ENCODE measurements at regions of chr2 and their contacts with region 1.

Region 1: DNA sequence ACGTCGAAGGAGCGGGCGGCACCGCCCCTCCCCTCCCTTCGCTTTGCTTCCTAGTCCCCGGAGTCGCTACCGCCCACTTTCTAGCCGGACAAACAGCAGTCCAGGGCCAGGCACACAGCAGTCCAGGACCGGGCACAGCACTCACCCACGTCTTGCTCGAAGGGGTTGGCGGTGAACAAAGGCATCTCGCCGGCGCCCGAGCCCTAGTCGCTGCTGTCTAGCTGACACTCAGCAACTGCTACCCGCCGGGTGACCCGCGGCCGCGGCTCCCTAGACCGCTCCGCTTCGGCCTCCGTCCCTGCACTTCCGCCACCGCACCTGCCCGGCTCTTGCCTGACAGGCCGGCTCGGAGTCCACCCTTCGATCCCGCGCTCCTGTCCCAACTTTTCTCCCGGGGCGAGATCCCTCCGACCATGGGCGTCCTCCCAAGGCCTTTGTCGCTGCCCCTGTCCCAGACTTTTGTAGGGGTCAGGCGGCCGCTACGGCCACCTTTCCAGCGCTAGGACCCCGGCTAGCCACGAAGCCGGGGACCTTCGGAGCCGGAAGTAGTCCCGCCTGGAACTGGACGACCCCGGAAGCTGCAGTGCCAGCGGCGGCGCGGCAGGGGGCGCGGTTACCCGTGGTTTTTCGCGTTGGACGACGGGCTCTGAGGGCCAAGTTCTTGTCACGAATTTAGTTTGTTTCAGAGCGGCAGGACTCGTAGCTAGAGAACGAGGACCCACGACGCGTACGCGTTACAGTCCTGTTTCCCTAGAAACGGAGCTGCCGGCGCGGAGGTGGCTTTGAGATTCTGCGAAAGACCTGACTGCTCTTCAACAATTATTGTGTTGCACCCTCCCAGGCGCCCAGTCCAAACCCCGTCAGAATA is at the start of gene STAM2:
- DNase-seq: peak; percentile 88 to 93
- ATAC-seq: peak; percentile 91
- H3K4me3 ChIP-seq: peak within 1 kb of the TSS; percentile 64
- H3K27ac ChIP-seq: peak within 1 kb of the TSS; percentile 94 to 97
- H3K4me1 ChIP-seq: peaks cover 33% of the 10 kb centered on the region
- CTCF ChIP-seq: peak; percentile 92
- EP300 ChIP-seq: no peak
- POLR2A ChIP-seq: peak; percentile 84
- RAD21 ChIP-seq: peak; percentile 92 to 97
- polyA plus RNA-seq, gene STAM2: 25.7 and 34.5 TPM in 2 replicates

Region 2: DNA sequence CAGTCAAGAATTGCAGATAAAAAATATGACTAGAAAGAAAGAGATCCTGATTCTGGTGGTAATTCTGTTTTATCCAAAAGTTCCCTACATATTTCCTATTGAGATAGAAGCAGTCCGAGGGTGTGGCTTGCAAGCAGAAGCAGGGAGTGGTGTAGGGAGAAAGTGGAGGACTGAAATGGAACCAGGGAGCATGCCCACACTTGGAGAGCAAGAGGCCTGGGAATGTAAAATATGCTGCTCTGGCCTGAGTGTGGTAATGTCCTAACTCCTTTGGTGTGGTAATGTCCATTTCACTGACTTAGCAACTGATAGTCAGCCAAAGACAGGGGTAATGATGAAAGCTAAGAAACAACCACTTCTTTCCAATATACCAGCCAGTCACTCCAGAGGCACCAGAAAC is 129.1 kb after region 1 on chr2:
- CTCF ChIA-PET with region 1: no interaction called
- POLR2A ChIA-PET with region 1: no interaction called
- DNase-seq: peak in 1 of 2 experiments; percentile 19
- ATAC-seq: peak in 1 of 2 experiments; percentile 25; a peak in 1 of 6 replicates
- H3K4me3 ChIP-seq: no peak overlapping the region
- H3K27ac ChIP-seq: no peak overlapping the region
- H3K4me1 ChIP-seq: peaks cover 24% of the 10 kb centered on the region
- CTCF ChIP-seq: no peak
- EP300 ChIP-seq: no peak
- POLR2A ChIP-seq: no peak
- RAD21 ChIP-seq: no peak

Region 3: GRCh38 chr2:152627351-152627957 is 451.8 kb after region 1 on chr2:
- CTCF ChIA-PET with region 1: interaction called, 15 read pairs
- POLR2A ChIA-PET with region 1: no interaction called
- DNase-seq: peak; percentile 14 to 42
- ATAC-seq: peak; percentile 68 to 73; a peak in 4 of 6 replicates
- H3K4me3 ChIP-seq: no peak overlapping the region
- H3K27ac ChIP-seq: no peak overlapping the region
- H3K4me1 ChIP-seq: no peaks in the 10 kb centered on the region
- CTCF ChIP-seq: peak; percentile 81
- EP300 ChIP-seq: no peak
- POLR2A ChIP-seq: no peak
- RAD21 ChIP-seq: peak; percentile 86 to 87

Region 4: GRCh38 chr2:152648336-152648735 is 472.6 kb after region 1 on chr2:
- CTCF ChIA-PET with region 1: interaction called, 11 read pairs
- POLR2A ChIA-PET with region 1: interaction called, 3 read pairs
- DNase-seq: peak; percentile 5 to 17
- ATAC-seq: peak; percentile 60 to 62; a peak in 5 of 6 replicates
- H3K4me3 ChIP-seq: no peak overlapping the region
- H3K27ac ChIP-seq: no peak overlapping the region
- H3K4me1 ChIP-seq: peaks cover 15% of the 10 kb centered on the region; the same call in 2 of the 3 replicates
- CTCF ChIP-seq: no peak
- EP300 ChIP-seq: no peak
- POLR2A ChIP-seq: no peak
- RAD21 ChIP-seq: no peak